BJ (cell line): ENCODE measurements at regions of chr1 and their contacts with region 1.

Region 1: DNA sequence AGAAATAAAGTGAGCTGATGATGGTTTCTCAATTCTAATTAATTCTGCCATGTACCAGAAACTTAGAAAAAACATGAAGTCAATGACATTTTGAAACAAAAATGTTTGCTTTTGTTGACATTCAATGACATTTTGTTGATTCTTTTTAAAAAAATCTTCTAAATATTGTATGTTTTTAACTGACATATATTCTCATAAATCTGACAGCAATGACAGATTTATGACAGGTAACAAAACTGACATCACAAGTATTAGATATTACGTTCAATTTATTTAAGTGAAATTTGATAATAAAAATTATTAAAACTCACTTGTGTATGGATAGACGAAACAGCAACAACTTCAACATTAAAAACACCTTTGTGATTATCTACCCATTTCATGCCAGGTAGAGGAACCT is 36.0 kb upstream of the ANGPTL3 start:
- DNase-seq: no peak
- H3K4me3 ChIP-seq: no peak overlapping the region
- H3K27me3 ChIP-seq: no peaks in the 10 kb centered on the region
- CTCF ChIP-seq: no peak

Region 2: GRCh38 chr1:61077676-61078541 is 1483.4 kb before region 1 on chr1:
- CTCF ChIA-PET with region 1: no interaction called
- POLR2A ChIA-PET with region 1: interaction called, 17 read pairs
- DNase-seq: peak; percentile 97
- H3K4me3 ChIP-seq: peak overlapping the region; percentile 49
- H3K27me3 ChIP-seq: no peaks in the 10 kb centered on the region
- CTCF ChIP-seq: no peak

Region 3: GRCh38 chr1:62364726-62365125 is 196.6 kb before region 1 on chr1:
- CTCF ChIA-PET with region 1: no interaction called
- POLR2A ChIA-PET with region 1: no interaction called
- DNase-seq: no peak
- H3K4me3 ChIP-seq: no peak overlapping the region
- H3K27me3 ChIP-seq: no peaks in the 10 kb centered on the region
- CTCF ChIP-seq: no peak